ENCODE measurements at regions of chr6 and their contacts with region 1.

Region 1: DNA sequence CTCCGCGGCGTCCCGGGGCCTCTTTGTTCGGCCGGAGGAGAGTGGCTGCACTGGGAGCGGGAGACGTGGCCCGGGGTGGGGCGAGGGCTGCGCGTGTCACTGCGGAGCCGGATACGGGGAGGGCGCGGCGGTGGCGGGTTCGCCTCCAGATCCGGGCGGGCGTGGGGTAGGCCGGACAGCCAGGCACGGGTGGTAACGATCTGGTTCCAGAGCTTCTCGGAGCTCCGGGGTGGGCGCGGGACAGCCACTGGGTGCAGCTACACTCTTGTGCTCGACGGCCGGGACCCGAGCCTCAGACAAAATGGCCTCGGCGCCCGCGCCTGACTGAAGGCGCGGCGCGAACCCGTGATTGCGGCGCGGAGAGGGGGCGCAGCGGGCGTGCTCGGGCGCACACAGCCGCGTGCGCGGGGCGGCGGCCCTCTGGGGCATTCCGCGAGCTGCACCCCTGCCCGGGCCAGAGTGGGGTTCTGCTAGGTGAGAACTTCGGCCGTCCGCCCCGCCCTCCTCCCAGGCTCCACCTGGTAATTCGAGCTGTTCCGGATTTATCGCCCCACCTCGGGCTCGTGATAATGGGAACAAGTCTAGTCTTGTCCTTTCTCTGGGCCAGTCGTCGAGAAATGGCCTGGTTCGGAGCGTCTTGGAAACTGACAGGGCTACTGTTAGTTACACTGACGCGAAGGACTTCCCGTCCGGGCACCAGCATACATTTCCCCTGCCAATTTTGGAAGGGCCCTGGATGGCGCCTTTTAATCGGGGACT is 1.0 kb downstream of the LOC128125822 start:
- DNase-seq: peak; percentile 90
- ATAC-seq: peak; percentile 70
- H3K4me3 Mint-ChIP-seq: peak overlapping the region; percentile 94
- H3K27ac Mint-ChIP-seq: peak overlapping the region; percentile 99
- H3K4me1 Mint-ChIP-seq: peaks cover 30% of the 10 kb centered on the region
- H3K27me3 Mint-ChIP-seq: peaks cover 22% of the 10 kb centered on the region; the same call in 1 of the 2 replicates
- CTCF ChIP-seq: no peak

Region 2: DNA sequence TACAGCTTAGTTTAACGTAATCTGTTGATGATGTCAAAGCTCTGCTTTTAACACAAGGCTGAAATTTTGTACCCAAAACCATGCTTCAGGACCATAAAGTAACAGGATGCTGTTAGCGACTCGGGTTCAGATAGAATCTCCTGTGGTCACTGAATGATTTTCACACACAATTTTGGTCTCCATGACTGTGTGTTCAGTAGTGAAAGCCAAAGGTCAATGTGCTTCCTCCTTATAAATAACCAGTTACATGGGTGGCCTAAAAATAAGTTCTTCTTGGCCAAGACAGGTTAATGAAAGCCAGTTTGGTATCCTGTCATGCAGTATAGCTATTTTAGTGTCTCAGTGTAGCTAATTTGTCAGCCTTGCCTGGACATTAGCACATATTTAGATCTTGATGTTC is 20.1 kb before region 1 on chr6:
- CTCF ChIA-PET with region 1: no interaction called
- POLR2A ChIA-PET with region 1: no interaction called
- DNase-seq: no peak
- ATAC-seq: no peak
- H3K4me3 Mint-ChIP-seq: no peak overlapping the region
- H3K27ac Mint-ChIP-seq: no peak overlapping the region
- H3K4me1 Mint-ChIP-seq: peaks cover 4% of the 10 kb centered on the region
- H3K27me3 Mint-ChIP-seq: peaks cover 12% of the 10 kb centered on the region
- CTCF ChIP-seq: no peak

Region 3: DNA sequence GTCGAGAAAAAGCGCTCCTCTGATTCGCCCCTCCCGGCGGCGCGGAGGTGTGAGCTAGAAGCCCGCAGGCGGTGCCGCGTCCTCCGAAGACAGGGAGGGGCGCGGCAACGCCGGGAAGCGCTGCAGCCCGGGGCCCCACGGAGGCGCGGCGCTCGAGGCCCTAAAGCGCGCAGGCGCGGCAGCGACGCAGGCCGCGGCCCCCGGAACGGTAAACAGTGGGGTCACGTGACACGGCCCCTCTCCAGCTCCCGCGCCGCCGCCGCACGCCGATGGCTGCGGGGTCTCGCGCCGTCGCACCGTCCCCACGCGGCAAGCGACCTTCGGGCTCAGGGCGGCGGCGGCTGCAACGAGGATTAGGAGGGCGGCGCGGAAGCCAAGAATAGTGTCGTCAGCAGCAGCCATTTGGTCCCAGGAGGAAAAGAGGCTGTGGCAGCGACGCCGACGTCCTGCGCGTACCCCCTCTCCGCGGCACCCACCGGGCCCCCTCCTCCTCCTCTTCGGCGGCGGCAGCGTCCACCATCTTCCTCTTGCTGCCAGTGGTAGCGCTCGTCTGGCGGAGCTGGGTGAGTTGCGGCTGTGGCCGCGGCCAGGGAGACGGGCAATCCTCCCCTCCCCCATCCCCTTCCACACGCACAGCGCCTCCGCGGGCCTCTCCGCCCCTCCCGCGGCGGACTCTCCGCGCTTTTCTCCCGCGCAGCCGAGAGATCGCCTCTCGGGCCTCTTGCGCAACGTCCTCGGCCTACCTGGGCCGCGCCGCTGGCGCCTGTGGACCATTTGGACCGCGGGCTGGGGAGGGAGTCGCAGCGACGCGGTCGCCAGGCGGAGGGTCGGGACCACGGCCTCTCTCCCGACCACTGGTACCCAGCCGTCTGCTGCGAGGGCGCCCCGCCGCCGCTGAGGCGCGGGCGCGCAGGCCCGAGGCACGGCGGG is 62.5 kb after region 1 on chr6 and contains the start of gene PHF3:
- CTCF ChIA-PET with region 1: interaction called, 3 read pairs
- POLR2A ChIA-PET with region 1: interaction called, 14 read pairs
- DNase-seq: peak; percentile 85
- ATAC-seq: peak; percentile 86
- H3K4me3 Mint-ChIP-seq: peak within 1 kb of the TSS; percentile 100
- H3K27ac Mint-ChIP-seq: peak within 1 kb of the TSS; percentile 100
- H3K4me1 Mint-ChIP-seq: peaks cover 42% of the 10 kb centered on the region
- H3K27me3 Mint-ChIP-seq: peaks cover 38% of the 10 kb centered on the region
- CTCF ChIP-seq: no peak
- total RNA-seq, gene PHF3: 50.2 to 56.4 TPM (median 52.6 TPM) in 3 replicates

Measured in WTC11 (cell line).